ENCODE measurements at regions of chr1 and their contacts with region 1.

Region 1: GRCh38 chr1:96236156-96236739 is 485.3 kb upstream of the PTBP2 start:
- DNase-seq: peak in 3 of 14 experiments; percentile 3 to 11 (median 9)
- ATAC-seq: no peak
- H3K4me3 ChIP-seq: no peak overlapping the region
- H3K4me3 Mint-ChIP-seq: no peak overlapping the region
- H3K27ac ChIP-seq: no peak overlapping the region
- H3K27ac Mint-ChIP-seq: no peak overlapping the region
- H3K4me1 ChIP-seq: no peaks in the 10 kb centered on the region
- H3K4me1 Mint-ChIP-seq: no peaks in the 10 kb centered on the region
- H3K27me3 ChIP-seq: no peaks in the 10 kb centered on the region
- H3K27me3 Mint-ChIP-seq: no peaks in the 10 kb centered on the region
- CTCF ChIP-seq: no peak

Region 2: DNA sequence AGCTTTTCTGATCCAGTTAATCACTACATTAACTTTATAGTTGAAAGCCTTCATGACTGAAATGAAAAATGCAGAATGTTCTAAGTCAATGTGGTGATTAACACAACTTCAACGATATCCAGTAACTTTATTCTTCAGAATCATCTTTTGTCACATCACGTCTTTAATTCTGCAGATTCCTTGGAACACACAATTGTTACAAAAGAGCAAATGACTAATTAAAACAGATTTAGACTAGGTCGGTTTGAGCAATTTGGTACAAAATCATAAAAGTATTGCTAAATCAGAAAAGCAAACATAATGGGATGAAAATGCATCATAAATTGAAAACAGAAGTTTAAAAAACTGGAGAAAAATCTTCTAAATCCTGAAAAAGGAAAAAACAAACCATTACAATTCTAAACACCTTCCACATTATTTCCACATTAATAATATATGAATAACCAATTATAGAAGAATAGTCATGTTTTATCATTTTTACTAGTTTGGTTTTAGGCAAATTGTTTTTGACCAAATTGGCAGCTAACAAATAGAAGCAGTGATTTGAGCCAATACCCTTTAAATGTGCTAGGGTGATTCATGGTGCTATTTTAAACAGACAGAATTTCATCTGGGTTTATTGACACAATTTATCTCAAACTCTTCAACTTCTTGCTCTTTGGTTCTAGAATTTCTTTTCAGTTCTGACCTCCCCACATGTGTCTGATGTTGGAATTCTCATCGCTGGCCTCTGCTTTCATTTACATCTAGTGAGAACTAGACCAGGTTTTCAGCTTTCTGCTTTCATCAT is 17.2 kb after region 1 on chr1:
- CTCF ChIA-PET with region 1: no interaction called
- POLR2A ChIA-PET with region 1: no interaction called
- intact Hi-C with region 1: loop called in 1 of 2 experiments (anchors 1 kb)
- DNase-seq: no peak
- ATAC-seq: no peak
- H3K4me3 ChIP-seq: no peak overlapping the region
- H3K4me3 Mint-ChIP-seq: no peak overlapping the region
- H3K27ac ChIP-seq: no peak overlapping the region
- H3K27ac Mint-ChIP-seq: no peak overlapping the region
- H3K4me1 ChIP-seq: no peaks in the 10 kb centered on the region
- H3K4me1 Mint-ChIP-seq: no peaks in the 10 kb centered on the region
- H3K27me3 ChIP-seq: no peaks in the 10 kb centered on the region
- H3K27me3 Mint-ChIP-seq: no peaks in the 10 kb centered on the region
- CTCF ChIP-seq: no peak

Region 3: GRCh38 chr1:96845464-96845863 is 609.2 kb after region 1 on chr1:
- CTCF ChIA-PET with region 1: no interaction called
- POLR2A ChIA-PET with region 1: no interaction called
- intact Hi-C with region 1: loop called in 1 of 2 experiments (anchors 10 kb)
- DNase-seq: peak in 8 of 14 experiments; percentile 5 to 32 (median 16)
- ATAC-seq: peak; percentile 46
- H3K4me3 ChIP-seq: no peak overlapping the region
- H3K4me3 Mint-ChIP-seq: no peak overlapping the region
- H3K27ac ChIP-seq: no peak overlapping the region
- H3K27ac Mint-ChIP-seq: no peak overlapping the region
- H3K4me1 ChIP-seq: no peaks in the 10 kb centered on the region
- H3K4me1 Mint-ChIP-seq: no peaks in the 10 kb centered on the region
- H3K27me3 ChIP-seq: no peaks in the 10 kb centered on the region
- H3K27me3 Mint-ChIP-seq: no peaks in the 10 kb centered on the region
- CTCF ChIP-seq: no peak